H1 (cell line): ENCODE measurements at regions of chrX and their contacts with region 1.

Region 1: GRCh38 chrX:126137899-126138298 is 28.2 kb downstream of the DCAF12L2 start:
- DNase-seq: no peak
- H3K4me3 ChIP-seq: no peak overlapping the region
- H3K27ac ChIP-seq: no peak overlapping the region
- H3K4me1 ChIP-seq: no peaks in the 10 kb centered on the region
- H3K27me3 ChIP-seq: no peaks in the 10 kb centered on the region
- CTCF ChIP-seq: peak in 2 of 3 experiments; percentile 22 to 60; a peak in 2 of 4 replicates
- EP300 ChIP-seq: no peak
- POLR2A ChIP-seq: no peak
- RAD21 ChIP-seq: peak; percentile 53 to 60

Region 2: GRCh38 chrX:125998432-125998831 is 139.5 kb before region 1 on chrX:
- CTCF ChIA-PET with region 1: interaction called, 10 read pairs
- POLR2A ChIA-PET with region 1: no interaction called
- DNase-seq: no peak
- H3K4me3 ChIP-seq: no peak overlapping the region
- H3K27ac ChIP-seq: no peak overlapping the region
- H3K4me1 ChIP-seq: no peaks in the 10 kb centered on the region
- H3K27me3 ChIP-seq: no peaks in the 10 kb centered on the region
- CTCF ChIP-seq: peak in 2 of 3 experiments; percentile 42 to 60; a peak in 2 of 4 replicates
- EP300 ChIP-seq: no peak
- POLR2A ChIP-seq: no peak
- RAD21 ChIP-seq: peak; percentile 68 to 79

Region 3: DNA sequence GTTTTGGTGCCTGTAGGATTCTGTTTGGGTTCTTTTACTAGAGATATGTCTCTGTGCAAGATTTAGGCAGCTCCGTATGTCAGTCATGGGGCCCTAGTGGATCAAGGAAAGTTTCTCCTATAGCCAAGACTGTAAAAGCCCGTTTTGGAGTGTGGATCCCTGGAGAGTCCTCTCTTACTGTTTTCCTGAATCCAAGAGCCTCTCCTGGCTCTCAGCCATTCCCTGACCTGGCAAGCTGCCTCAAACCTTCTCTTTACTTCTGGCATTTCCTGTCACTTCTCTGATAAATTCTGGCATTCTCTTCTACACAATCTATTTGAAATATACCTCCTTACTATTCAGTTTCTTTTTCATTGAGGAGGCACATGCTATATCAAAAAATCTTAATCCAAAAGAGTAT is 13.2 kb before region 1 on chrX:
- CTCF ChIA-PET with region 1: interaction called, 10 read pairs
- POLR2A ChIA-PET with region 1: no interaction called
- DNase-seq: no peak
- H3K4me3 ChIP-seq: no peak overlapping the region
- H3K27ac ChIP-seq: no peak overlapping the region
- H3K4me1 ChIP-seq: no peaks in the 10 kb centered on the region
- H3K27me3 ChIP-seq: no peaks in the 10 kb centered on the region
- CTCF ChIP-seq: no peak
- EP300 ChIP-seq: no peak
- POLR2A ChIP-seq: no peak
- RAD21 ChIP-seq: no peak

Region 4: GRCh38 chrX:126580877-126581276 is 443.0 kb after region 1 on chrX:
- CTCF ChIA-PET with region 1: no interaction called
- POLR2A ChIA-PET with region 1: no interaction called
- DNase-seq: no peak
- H3K4me3 ChIP-seq: no peak overlapping the region
- H3K27ac ChIP-seq: no peak overlapping the region
- H3K4me1 ChIP-seq: no peaks in the 10 kb centered on the region
- H3K27me3 ChIP-seq: no peaks in the 10 kb centered on the region
- CTCF ChIP-seq: no peak
- EP300 ChIP-seq: no peak
- POLR2A ChIP-seq: no peak
- RAD21 ChIP-seq: no peak